ENCODE measurements at regions of chr12 and their contacts with region 1.

Region 1: GRCh38 chr12:121550974-121551634 is 29.7 kb downstream of the KDM2B start:
- DNase-seq: no peak
- H3K4me3 Mint-ChIP-seq: no peak overlapping the region
- H3K27ac Mint-ChIP-seq: no peak overlapping the region
- H3K4me1 Mint-ChIP-seq: no peaks in the 10 kb centered on the region
- H3K27me3 Mint-ChIP-seq: peaks cover 13% of the 10 kb centered on the region
- CTCF ChIP-seq: no peak

Region 2: GRCh38 chr12:121490401-121491281 is 60.5 kb before region 1 on chr12:
- CTCF ChIA-PET with region 1: no interaction called
- intact Hi-C with region 1: no loop called
- DNase-seq: no peak
- H3K4me3 Mint-ChIP-seq: no peak overlapping the region
- H3K27ac Mint-ChIP-seq: no peak overlapping the region
- H3K4me1 Mint-ChIP-seq: no peaks in the 10 kb centered on the region
- H3K27me3 Mint-ChIP-seq: no peaks in the 10 kb centered on the region
- CTCF ChIP-seq: no peak

Region 3: GRCh38 chr12:121513464-121514183 is 37.5 kb before region 1 on chr12:
- CTCF ChIA-PET with region 1: no interaction called
- intact Hi-C with region 1: no loop called
- DNase-seq: peak; percentile 83
- H3K4me3 Mint-ChIP-seq: no peak overlapping the region
- H3K27ac Mint-ChIP-seq: no peak overlapping the region
- H3K4me1 Mint-ChIP-seq: peaks cover 9% of the 10 kb centered on the region
- H3K27me3 Mint-ChIP-seq: no peaks in the 10 kb centered on the region
- CTCF ChIP-seq: no peak

Region 4: DNA sequence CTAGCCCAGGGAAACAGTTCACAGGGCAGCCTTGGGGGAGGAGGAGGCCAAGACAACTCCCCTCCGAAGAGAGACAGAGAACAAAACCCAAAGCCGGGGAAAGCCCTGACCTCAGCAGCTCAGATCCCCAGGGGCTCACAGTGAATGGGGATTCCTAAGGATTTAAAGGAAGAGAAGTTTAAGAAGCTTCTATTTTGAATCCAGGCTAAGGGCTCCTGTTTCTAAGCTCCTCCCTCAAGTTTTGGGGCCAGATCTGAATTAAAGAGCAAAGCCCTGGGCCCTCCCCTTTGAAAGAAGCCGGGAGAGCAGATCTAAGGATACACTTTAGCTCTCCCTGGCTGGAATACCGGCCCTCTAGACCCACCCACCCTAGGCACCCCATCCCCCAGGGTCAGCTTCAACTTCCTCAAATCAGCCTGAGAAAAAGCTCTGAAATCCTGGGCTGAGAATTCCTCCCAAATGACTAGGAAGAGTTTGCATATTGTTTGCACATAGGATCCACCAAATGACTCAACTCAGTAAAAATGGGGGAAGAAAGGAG is 25.8 kb after region 1 on chr12:
- CTCF ChIA-PET with region 1: no interaction called
- intact Hi-C with region 1: no loop called
- DNase-seq: no peak
- H3K4me3 Mint-ChIP-seq: no peak overlapping the region
- H3K27ac Mint-ChIP-seq: no peak overlapping the region
- H3K4me1 Mint-ChIP-seq: no peaks in the 10 kb centered on the region
- H3K27me3 Mint-ChIP-seq: peaks cover 29% of the 10 kb centered on the region
- CTCF ChIP-seq: no peak

Region 5: GRCh38 chr12:121626087-121626852 is 75.2 kb after region 1 on chr12 and contains the start of gene ORAI1:
- CTCF ChIA-PET with region 1: interaction called, 61 read pairs
- intact Hi-C with region 1: loop called (anchors 1 kb)
- DNase-seq: peak; percentile 99
- H3K4me3 Mint-ChIP-seq: peak within 1 kb of the TSS; percentile 76
- H3K27ac Mint-ChIP-seq: peak within 1 kb of the TSS; percentile 67
- H3K4me1 Mint-ChIP-seq: peaks cover 29% of the 10 kb centered on the region
- H3K27me3 Mint-ChIP-seq: no peaks in the 10 kb centered on the region
- CTCF ChIP-seq: no peak
- total RNA-seq, gene ORAI1: 33.4 and 35.5 TPM in 2 replicates

Region 6: GRCh38 chr12:121668750-121669520 is 117.8 kb after region 1 on chr12:
- CTCF ChIA-PET with region 1: interaction called, 139 read pairs
- intact Hi-C with region 1: no loop called
- DNase-seq: peak; percentile 63
- H3K4me3 Mint-ChIP-seq: no peak overlapping the region
- H3K27ac Mint-ChIP-seq: no peak overlapping the region
- H3K4me1 Mint-ChIP-seq: peaks cover 20% of the 10 kb centered on the region
- H3K27me3 Mint-ChIP-seq: no peaks in the 10 kb centered on the region
- CTCF ChIP-seq: peak; percentile 73

Region 7: GRCh38 chr12:121678716-121679580 is 127.8 kb after region 1 on chr12:
- CTCF ChIA-PET with region 1: interaction called, 10 read pairs
- intact Hi-C with region 1: no loop called
- DNase-seq: no peak
- H3K4me3 Mint-ChIP-seq: no peak overlapping the region
- H3K27ac Mint-ChIP-seq: no peak overlapping the region
- H3K4me1 Mint-ChIP-seq: peaks cover 5% of the 10 kb centered on the region
- H3K27me3 Mint-ChIP-seq: no peaks in the 10 kb centered on the region
- CTCF ChIP-seq: no peak

Measured in Calu3 (cell line).